K562 (cell line): ENCODE measurements at regions of chr1 and their contacts with region 1.

Region 1: DNA sequence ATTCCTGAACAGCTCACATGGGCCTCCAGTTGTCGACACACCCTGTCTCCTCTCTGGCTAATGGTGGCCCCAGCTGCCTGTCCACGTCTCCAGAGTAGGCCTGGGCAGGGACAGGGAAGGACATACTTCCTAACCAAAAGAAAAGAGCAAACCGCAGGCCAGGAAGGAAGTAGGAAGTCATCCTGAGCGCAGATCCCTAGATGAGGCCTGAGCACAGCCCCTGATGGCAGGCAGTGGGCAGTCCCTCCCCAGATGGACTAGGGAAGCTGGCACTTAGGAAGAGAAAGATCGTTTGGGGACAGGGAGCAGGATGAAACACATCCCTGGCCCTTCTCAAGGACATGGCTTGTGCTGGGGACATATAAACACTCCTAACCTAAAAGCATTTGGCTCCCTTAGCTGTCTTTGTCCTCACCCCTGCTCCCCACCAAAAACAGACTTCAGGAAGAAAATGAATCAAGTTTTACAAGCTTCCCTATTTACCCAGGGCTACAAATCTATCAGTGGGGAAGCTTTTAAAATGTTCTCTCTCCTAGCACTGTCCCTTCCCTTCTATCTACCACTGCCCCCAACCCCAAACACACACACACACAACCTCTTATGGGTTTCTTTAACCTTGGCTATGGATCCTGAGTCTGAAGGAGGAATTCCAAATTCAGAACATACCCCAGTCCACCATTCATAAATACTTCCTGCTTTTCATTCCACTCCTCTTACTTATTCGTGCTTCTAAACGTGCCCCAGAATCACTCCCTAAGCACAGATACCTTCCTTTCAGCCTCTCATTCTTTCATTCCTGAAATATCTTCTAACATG is 21.1 kb downstream of the SSBP3 start:
- DNase-seq: no peak
- ATAC-seq: peak; percentile 22
- H3K4me3 ChIP-seq: no peak overlapping the region
- H3K27ac ChIP-seq: peak overlapping the region; percentile 39; the same call in 1 of the 3 replicates
- H3K4me1 ChIP-seq: peaks cover 7 to 21% of the 10 kb centered on the region in 2 experiments; a peak in 4 of 5 replicates
- H3K27me3 ChIP-seq: no peaks in the 10 kb centered on the region
- CTCF ChIP-seq: no peak
- EP300 ChIP-seq: no peak
- POLR2A ChIP-seq: no peak
- RAD21 ChIP-seq: no peak

Region 2: DNA sequence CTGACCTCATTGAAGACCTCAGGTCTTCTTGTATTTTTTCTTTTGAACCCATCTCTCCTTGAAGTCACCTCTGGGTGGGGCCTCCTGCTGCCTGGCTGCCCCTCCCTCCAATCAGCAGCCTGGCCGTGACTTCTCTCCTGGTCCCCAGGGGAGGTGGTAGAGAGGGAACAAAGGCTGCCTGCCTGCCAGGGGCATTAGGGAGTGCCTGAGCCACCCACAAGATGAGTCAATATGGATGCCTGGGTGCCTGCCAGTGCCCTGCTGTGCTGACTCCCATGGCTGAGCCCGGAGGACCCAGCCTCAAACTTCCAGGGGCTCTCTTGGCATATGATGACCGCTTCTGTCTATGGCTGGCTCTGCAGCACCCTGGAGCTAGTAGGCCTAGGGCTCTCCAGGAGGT is 227.0 kb before region 1 on chr1:
- CTCF ChIA-PET with region 1: no interaction called
- POLR2A ChIA-PET with region 1: no interaction called
- in situ Hi-C with region 1: no loop called
- intact Hi-C with region 1: no loop called
- DNase-seq: no peak
- ATAC-seq: no peak
- H3K4me3 ChIP-seq: no peak overlapping the region
- H3K27ac ChIP-seq: no peak overlapping the region
- H3K4me1 ChIP-seq: peaks cover 3 to 10% of the 10 kb centered on the region in 2 experiments; a peak in 3 of 5 replicates
- H3K27me3 ChIP-seq: peaks cover 0 to 5% of the 10 kb centered on the region in 2 experiments; a peak in 1 of 5 replicates
- CTCF ChIP-seq: no peak
- EP300 ChIP-seq: no peak
- POLR2A ChIP-seq: no peak
- RAD21 ChIP-seq: no peak

Region 3: DNA sequence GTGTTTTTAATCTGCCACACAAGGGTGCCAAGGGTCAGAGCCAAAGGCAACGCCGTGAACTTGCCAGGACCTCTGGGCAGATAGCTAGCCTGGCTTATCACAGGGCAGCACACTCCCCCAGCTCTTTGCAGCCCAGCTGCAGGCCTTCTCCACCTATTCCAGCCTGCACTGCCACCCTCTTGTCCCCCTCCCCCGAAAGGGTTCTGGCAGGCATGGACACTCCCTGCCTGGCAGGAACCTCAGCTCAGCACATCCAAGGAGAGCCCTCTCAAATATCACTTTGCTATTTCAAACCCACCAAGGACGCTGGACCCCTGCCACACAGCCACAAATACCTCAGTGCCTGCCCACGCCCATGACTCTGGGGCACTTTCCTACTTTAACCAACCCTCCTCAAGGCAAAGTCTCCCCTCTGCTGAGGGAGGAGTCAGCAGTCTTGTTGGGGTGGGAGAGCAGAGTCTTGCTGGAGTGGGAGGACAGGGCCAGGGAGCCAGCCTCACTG is 12.0 kb after region 1 on chr1:
- CTCF ChIA-PET with region 1: no interaction called
- POLR2A ChIA-PET with region 1: interaction called, 43 read pairs
- in situ Hi-C with region 1: no loop called
- intact Hi-C with region 1: no loop called
- DNase-seq: no peak
- ATAC-seq: peak; percentile 58
- H3K4me3 ChIP-seq: no peak overlapping the region
- H3K27ac ChIP-seq: no peak overlapping the region
- H3K4me1 ChIP-seq: peaks cover 17 to 28% of the 10 kb centered on the region in 2 experiments; a peak in 4 of 5 replicates
- H3K27me3 ChIP-seq: no peaks in the 10 kb centered on the region
- CTCF ChIP-seq: no peak
- EP300 ChIP-seq: no peak
- POLR2A ChIP-seq: no peak
- RAD21 ChIP-seq: no peak